AG04449 (cell line): ENCODE measurements at regions of chr11 and their contacts with region 1.

Region 1: DNA sequence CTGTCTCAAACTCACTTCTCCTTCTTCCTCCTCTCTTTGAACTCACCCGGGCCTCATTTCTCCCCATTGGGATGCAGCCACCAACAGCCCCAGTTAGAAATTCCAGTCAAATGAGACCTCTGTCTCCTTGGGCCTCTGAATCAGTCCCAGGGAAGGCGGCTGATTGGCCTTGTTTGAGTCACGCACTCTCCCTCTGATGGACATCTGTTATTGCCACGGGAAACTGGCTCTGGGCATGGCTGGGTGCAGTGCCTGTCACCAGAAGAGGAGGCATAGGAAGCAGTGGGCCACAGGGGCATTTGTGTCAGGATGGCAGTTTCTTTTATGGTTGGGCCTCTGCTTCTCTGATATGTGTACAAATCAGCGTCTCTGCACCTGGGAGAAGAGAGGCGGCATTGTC is 9.6 kb upstream of the WNT11 start:
- DNase-seq: peak; percentile 29
- H3K4me3 ChIP-seq: no peak overlapping the region
- CTCF ChIP-seq: no peak

Region 2: GRCh38 chr11:76161261-76161961 is 54.5 kb before region 1 on chr11:
- CTCF ChIA-PET with region 1: no interaction called
- POLR2A ChIA-PET with region 1: no interaction called
- DNase-seq: no peak
- H3K4me3 ChIP-seq: peak overlapping the region; percentile 3; the same call in 1 of the 2 replicates
- CTCF ChIP-seq: no peak

Region 3: DNA sequence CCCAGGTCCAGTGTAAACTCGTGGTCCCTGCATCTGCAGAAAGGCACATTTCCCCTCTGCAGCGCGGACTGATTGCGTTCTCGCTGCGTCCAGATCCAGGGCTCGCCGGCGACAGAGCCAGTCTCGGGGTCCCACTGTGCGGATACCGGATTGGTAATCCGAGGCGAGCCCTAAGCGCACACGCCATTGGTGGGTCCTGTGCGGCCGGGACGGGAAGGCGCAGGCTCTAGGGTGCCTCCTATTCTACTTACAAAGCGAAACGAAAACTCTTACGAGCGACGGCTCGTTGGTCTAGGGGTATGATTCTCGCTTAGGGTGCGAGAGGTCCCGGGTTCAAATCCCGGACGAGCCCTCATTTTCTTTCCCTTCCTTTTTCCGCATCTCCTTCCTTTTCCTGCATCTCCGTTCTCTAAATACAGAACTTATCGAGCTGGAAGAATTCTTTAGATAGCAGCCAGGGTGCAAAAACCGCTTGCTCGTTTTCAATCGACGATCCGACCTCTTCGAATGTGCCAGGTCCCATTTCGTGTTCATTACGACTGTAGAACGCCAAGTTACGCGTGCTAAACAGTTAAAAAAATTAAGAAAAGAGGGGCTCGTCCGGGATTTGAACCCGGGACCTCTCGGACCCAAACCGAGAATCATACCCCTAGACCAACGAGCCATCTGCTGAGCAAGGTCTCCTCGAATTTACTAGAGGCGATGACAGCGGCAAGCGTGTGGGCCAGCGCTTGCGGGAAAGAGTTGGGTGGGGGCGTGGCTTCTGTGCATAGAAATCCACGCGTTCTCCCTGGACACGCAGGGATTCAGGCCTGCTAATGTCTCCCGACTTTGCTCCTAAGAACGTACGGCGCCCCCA is 19.5 kb after region 1 on chr11:
- CTCF ChIA-PET with region 1: interaction called, 60 read pairs
- POLR2A ChIA-PET with region 1: no interaction called
- DNase-seq: peak; percentile 45
- H3K4me3 ChIP-seq: peak overlapping the region; percentile 92
- CTCF ChIP-seq: no peak